GM23248 (cell line): ENCODE measurements at regions of chr3 and their contacts with region 1.

Region 1: GRCh38 chr3:182829761-182830405 is 36.6 kb downstream of the ATP11B start:
- DNase-seq: no peak
- H3K4me3 ChIP-seq: no peak overlapping the region
- H3K27ac ChIP-seq: no peak overlapping the region
- H3K4me1 ChIP-seq: no peaks in the 10 kb centered on the region
- H3K27me3 ChIP-seq: no peaks in the 10 kb centered on the region

Region 2: GRCh38 chr3:182722907-182723306 is 107.0 kb before region 1 on chr3:
- in situ Hi-C with region 1: loop called (anchors 5 kb)
- DNase-seq: peak; percentile 41
- H3K4me3 ChIP-seq: no peak overlapping the region
- H3K27ac ChIP-seq: no peak overlapping the region
- H3K4me1 ChIP-seq: peaks cover 9% of the 10 kb centered on the region
- H3K27me3 ChIP-seq: no peaks in the 10 kb centered on the region

Region 3: GRCh38 chr3:182925330-182925943 is 95.6 kb after region 1 on chr3:
- in situ Hi-C with region 1: no loop called
- DNase-seq: peak; percentile 81
- H3K4me3 ChIP-seq: no peak overlapping the region
- H3K27ac ChIP-seq: peak overlapping the region; percentile 25
- H3K4me1 ChIP-seq: peaks cover 13% of the 10 kb centered on the region
- H3K27me3 ChIP-seq: no peaks in the 10 kb centered on the region